RWPE1 (cell line): ENCODE measurements at regions of chr10 and their contacts with region 1.

Region 1: DNA sequence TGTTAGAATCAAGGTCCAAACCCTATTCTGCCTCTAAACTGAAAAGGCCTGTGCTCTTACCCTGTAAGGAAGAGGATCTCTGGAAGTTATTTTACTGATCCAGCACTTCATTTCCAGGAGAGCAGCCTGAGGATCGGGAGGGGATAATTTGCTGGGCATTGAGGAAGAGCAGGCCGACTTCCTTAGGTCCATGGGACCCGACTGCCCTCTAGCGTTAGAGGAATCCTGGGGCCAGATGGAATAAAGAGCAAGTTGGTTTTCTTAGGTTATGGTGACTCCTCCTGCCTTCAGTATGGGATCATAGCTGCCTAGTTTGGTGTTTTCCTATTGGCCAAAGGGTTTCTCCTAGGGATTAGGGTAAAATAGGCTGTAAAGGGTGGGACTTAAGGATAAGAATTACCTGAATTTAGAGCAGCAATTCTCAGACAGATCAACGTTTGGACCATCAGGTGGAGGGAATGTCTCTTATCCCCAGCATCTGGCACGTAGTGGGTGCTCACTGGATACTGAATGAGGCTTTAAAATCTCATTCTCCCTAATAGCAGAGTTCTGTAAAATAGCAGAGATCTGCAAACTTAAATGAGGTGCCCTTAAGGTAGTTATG is 40.0 kb upstream of the SORBS1 start:
- DNase-seq: peak; percentile 87
- H3K27ac ChIP-seq: no peak overlapping the region
- CTCF ChIP-seq: peak; percentile 93

Region 2: GRCh38 chr10:95290461-95291364 is 310.5 kb before region 1 on chr10 and contains the start of gene PDLIM1:
- CTCF ChIA-PET with region 1: no interaction called
- POLR2A ChIA-PET with region 1: no interaction called
- DNase-seq: peak; percentile 93
- H3K27ac ChIP-seq: peak within 1 kb of the TSS; percentile 86
- CTCF ChIP-seq: peak; percentile 46

Region 3: GRCh38 chr10:95374597-95375209 is 226.5 kb before region 1 on chr10:
- CTCF ChIA-PET with region 1: interaction called, 94 read pairs
- POLR2A ChIA-PET with region 1: no interaction called
- DNase-seq: peak; percentile 85
- H3K27ac ChIP-seq: no peak overlapping the region
- CTCF ChIP-seq: peak; percentile 84

Region 4: DNA sequence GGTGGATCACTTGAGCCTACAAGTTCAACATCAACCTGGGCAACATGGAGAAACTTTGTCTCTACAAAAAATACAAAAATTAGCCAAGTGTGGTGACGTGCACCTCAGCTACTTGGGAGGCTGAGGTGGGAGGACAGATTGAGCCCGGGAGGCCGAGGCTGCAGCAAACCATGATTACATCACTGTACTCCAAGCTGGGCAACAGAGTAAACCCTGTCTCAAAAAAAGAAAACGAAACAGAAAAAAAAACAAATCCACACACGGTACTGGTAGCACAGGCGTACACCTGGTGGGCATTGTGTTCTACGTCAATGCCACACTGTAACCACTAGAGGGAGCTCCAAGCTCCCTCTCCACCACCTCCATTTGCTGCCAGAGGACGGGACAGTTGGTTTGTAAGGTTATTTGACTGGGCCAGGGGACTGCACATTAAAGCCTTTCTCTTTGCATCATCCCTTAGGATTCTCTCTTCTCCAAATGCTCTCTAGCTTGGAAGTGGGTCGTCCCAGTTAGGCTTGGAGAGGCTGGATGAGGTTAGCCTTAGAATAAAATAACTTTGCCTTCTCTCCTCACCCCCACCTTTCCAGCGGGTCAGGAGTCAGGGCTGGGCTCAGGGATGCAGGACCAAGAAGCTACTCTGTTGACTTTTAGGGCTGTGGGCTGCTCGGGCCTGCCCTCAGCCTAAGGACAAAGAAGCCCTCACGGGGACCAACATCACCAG is 170.8 kb before region 1 on chr10:
- CTCF ChIA-PET with region 1: interaction called, 18 read pairs
- POLR2A ChIA-PET with region 1: no interaction called
- DNase-seq: peak; percentile 76
- H3K27ac ChIP-seq: no peak overlapping the region
- CTCF ChIP-seq: peak; percentile 93

Region 5: GRCh38 chr10:95456516-95456915 is 144.7 kb before region 1 on chr10:
- CTCF ChIA-PET with region 1: interaction called, 15 read pairs
- POLR2A ChIA-PET with region 1: no interaction called
- DNase-seq: peak; percentile 26
- H3K27ac ChIP-seq: no peak overlapping the region
- CTCF ChIP-seq: no peak

Region 6: DNA sequence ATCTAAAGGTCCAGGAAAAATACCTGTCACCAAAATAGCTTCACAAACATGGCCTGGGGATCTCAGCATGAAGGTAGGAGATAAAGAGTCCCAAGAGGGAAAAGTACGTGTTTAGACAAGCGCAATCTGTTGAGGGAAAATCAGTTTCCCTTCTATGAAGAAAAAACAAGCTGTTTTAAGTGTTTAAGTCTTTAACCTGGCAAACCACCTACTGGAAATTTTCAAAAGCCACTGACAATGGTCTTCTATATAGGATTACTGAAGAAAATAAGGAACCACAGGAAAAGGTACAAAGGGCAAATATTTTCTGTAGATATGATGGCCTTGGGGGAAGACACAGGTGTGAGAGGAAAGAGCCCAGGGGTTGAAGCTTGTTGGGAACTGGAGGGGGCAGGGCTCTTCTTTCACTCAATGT is 34.1 kb after region 1 on chr10:
- CTCF ChIA-PET with region 1: no interaction called
- POLR2A ChIA-PET with region 1: no interaction called
- DNase-seq: no peak
- H3K27ac ChIP-seq: no peak overlapping the region
- CTCF ChIP-seq: no peak

Region 7: GRCh38 chr10:95683966-95684365 is 82.7 kb after region 1 on chr10:
- CTCF ChIA-PET with region 1: no interaction called
- POLR2A ChIA-PET with region 1: no interaction called
- DNase-seq: no peak
- H3K27ac ChIP-seq: no peak overlapping the region
- CTCF ChIP-seq: no peak